Gastrocnemius medialis (tissue), 4 donors: ENCODE measurements at regions of chr10 and their contacts with region 1.

Region 1: DNA sequence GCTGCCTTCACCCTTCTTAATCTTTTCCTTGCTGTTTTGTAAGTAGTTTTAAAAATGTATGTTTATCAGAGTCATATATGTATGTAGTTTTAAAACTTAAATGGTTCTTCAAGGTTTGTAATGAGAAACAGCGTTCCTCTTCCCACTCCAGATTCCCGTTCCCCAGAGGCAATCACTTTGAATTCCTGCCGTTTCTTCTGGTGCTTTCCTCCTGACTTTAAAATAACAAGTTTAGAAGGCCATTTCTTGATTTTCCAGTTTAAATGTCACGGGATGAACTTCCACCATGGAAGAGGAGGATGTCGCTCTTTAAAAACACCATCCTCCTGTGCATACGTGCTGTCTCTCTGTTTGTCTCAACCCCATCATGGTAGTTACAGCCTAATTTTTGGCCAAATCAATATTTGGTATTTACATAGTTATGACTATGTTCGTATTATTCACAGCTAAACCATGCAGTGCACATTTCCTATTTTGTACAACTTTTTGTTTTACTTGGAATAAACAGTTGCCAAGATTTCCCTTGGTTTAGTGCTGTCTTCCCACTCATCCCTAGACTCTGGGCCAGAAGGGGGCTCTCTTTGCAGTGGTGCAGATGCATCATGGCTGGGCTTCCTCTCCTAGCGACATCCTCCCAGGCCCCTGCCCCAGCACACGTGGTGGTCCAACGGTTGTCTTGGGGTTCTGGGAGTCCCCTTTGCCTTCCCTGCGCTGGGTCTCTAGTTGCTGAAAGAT is 151.4 kb downstream of the PTPN20 start:
- DNase-seq: no peak
- ATAC-seq: no peak
- H3K4me3 ChIP-seq: no peak overlapping the region
- H3K27ac ChIP-seq: peak overlapping the region in 2 of 4 donors; percentile 53 to 58
- H3K4me1 ChIP-seq: peaks cover 26 to 37% of the 10 kb centered on the region in 2 donors
- H3K27me3 ChIP-seq: no peaks in the 10 kb centered on the region
- CTCF ChIP-seq: no peak
- POLR2A ChIP-seq: no peak

Region 2: DNA sequence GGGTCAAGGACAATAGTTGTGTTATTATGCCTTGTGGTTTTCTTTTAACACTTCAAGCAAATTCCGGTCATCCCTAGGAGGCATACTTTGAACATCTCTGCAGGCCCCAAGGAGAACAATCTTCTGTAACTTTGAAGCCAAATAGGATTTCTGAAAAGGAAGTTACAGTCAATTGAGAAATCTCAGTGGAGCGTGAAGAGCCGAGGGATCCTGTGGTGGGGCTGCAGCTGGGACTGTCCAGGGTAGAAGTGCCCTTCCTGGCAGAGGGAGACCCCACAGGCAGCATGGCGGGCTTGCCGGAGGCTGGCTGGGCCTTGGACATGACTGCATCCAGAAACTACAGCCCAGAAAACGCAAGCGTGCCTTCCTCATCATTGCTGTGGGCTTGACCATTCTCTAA is 28.3 kb after region 1 on chr10:
- in situ Hi-C with region 1: no loop called
- intact Hi-C with region 1: no loop called
- DNase-seq: no peak
- ATAC-seq: no peak
- H3K4me3 ChIP-seq: no peak overlapping the region
- H3K27ac ChIP-seq: no peak overlapping the region
- H3K4me1 ChIP-seq: no peaks in the 10 kb centered on the region
- H3K27me3 ChIP-seq: no peaks in the 10 kb centered on the region
- CTCF ChIP-seq: no peak
- POLR2A ChIP-seq: no peak

Region 3: GRCh38 chr10:47181052-47181849 is 118.6 kb after region 1 on chr10:
- in situ Hi-C with region 1: no loop called
- intact Hi-C with region 1: loop called (anchors 5 kb)
- DNase-seq: no peak
- ATAC-seq: no peak
- H3K4me3 ChIP-seq: no peak overlapping the region
- H3K27ac ChIP-seq: no peak overlapping the region
- H3K4me1 ChIP-seq: peaks cover 0 to 22% of the 10 kb centered on the region in 2 donors
- H3K27me3 ChIP-seq: no peaks in the 10 kb centered on the region
- CTCF ChIP-seq: no peak
- POLR2A ChIP-seq: no peak

Region 4: GRCh38 chr10:47257396-47258120 is 194.9 kb after region 1 on chr10:
- in situ Hi-C with region 1: no loop called
- intact Hi-C with region 1: loop called (anchors 5 kb)
- DNase-seq: no peak
- ATAC-seq: no peak
- H3K4me3 ChIP-seq: no peak overlapping the region
- H3K27ac ChIP-seq: no peak overlapping the region
- H3K4me1 ChIP-seq: peaks cover 12 to 16% of the 10 kb centered on the region in 2 donors
- H3K27me3 ChIP-seq: no peaks in the 10 kb centered on the region
- CTCF ChIP-seq: no peak
- POLR2A ChIP-seq: no peak

Region 5: DNA sequence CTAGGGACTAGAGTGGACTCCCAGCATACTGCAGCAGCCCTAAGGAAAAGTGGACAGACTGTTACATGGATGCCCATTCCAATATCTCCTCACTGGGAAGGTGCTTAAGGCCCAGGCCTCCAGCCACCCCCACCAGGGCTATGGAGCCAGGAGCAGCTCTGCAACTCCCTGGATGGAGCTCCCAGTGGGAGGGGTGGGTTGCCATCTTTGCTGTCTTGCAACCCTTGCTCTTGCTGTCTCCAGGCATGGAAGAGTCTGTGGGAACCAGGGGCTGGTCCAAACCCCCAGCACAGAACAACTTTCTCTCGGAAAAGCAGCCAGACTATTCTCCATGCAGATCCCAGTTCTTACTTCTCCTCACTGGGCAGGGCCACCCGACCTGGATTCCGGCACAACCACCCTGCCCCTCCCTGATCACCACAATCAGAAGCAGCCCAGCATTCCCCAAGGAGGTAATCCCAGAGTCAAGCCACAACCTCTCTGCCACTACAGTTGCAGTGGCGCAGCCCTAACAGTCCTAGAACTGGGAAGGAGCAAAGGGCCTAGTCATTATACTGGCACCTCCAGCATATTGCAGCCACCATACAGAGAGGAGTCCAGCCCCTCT is 363.3 kb after region 1 on chr10:
- in situ Hi-C with region 1: no loop called
- intact Hi-C with region 1: no loop called
- DNase-seq: no peak
- ATAC-seq: no peak
- H3K4me3 ChIP-seq: no peak overlapping the region
- H3K27ac ChIP-seq: no peak overlapping the region
- H3K4me1 ChIP-seq: no peaks in the 10 kb centered on the region
- H3K27me3 ChIP-seq: no peaks in the 10 kb centered on the region
- CTCF ChIP-seq: no peak
- POLR2A ChIP-seq: no peak